ENCODE measurements at regions of chr1 and their contacts with region 1.

Region 1: GRCh38 chr1:43912607-43913006 is 21.0 kb upstream of the ARTN start:
- DNase-seq: no peak
- ATAC-seq: no peak
- H3K4me3 ChIP-seq: no peak overlapping the region
- H3K27ac ChIP-seq: peak overlapping the region in 1 of 2 experiments; percentile 46; a peak in 3 of 6 replicates
- H3K4me1 ChIP-seq: peaks cover 6% of the 10 kb centered on the region; the same call in 1 of the 3 replicates
- CTCF ChIP-seq: no peak
- EP300 ChIP-seq: no peak
- POLR2A ChIP-seq: no peak
- RAD21 ChIP-seq: no peak

Region 2: DNA sequence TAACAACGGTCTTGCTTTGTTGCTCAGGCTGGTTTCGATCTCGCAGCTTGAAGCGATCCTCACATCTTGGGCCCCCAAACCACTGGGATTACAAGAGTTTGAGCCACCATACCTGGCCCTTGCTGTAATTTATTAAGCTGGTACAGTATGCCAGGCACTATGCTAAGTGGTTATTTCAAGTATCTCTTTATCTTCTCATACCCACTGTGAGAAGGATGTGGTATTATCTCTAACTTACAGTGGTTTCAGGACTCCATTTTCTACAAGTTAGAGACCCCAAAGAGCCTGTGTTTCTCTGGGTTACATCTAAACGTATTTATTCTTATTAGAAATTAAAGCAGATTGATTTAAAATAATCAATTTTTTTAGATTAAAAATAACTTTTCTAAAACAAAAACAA is 213.3 kb before region 1 on chr1:
- CTCF ChIA-PET with region 1: no interaction called
- POLR2A ChIA-PET with region 1: no interaction called
- DNase-seq: no peak
- ATAC-seq: no peak
- H3K4me3 ChIP-seq: no peak overlapping the region
- H3K27ac ChIP-seq: no peak overlapping the region
- H3K4me1 ChIP-seq: no peaks in the 10 kb centered on the region
- CTCF ChIP-seq: no peak
- EP300 ChIP-seq: no peak
- POLR2A ChIP-seq: no peak
- RAD21 ChIP-seq: no peak

Region 3: DNA sequence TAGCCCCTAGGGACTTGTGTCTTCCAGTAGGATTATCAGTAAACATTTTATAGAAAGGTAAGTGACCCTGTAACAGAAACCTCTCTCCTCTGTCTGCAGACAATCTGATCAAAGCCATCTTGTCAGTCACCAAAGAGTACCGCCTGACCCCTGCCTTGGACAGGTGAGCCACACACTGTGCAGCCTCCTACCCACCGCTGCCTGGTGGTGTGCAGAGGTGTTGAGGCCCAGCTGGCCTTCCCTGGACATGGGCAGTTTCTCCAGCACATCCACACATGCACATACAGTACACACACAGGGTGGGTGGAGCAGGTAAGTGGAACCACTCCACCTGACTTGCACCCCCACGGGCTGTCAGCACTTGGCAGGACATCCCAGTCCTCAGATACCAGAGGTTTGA is 14.5 kb before region 1 on chr1:
- CTCF ChIA-PET with region 1: interaction called, 10 read pairs
- POLR2A ChIA-PET with region 1: no interaction called
- DNase-seq: no peak
- ATAC-seq: no peak
- H3K4me3 ChIP-seq: no peak overlapping the region
- H3K27ac ChIP-seq: no peak overlapping the region
- H3K4me1 ChIP-seq: no peaks in the 10 kb centered on the region
- CTCF ChIP-seq: no peak
- EP300 ChIP-seq: no peak
- POLR2A ChIP-seq: no peak
- RAD21 ChIP-seq: no peak

Region 4: DNA sequence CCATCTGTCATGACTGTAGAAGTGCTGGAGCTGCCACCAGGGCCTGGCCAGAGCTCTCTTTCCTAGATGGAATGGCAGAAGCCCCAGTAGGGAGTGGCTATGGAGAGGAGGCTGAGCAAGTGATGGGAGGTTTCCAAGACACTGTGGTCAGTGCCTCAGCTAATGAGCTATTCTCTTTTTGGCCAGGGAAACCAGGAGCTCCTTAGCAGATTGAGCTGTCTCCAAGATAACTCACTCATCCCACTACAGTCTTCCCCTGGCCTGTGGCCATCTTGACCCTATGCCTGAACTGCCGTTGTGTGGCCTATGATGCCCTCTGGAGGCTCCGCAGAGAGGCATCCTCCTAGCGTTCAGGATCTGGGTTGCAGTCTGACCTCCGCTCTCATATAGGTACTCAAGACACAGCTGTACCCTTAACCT is 382.0 kb after region 1 on chr1:
- CTCF ChIA-PET with region 1: no interaction called
- POLR2A ChIA-PET with region 1: no interaction called
- DNase-seq: peak; percentile 28 to 32
- ATAC-seq: peak; percentile 64 to 92; a peak in 5 of 6 replicates
- H3K4me3 ChIP-seq: no peak overlapping the region
- H3K27ac ChIP-seq: no peak overlapping the region
- H3K4me1 ChIP-seq: no peaks in the 10 kb centered on the region
- CTCF ChIP-seq: peak; percentile 21; the same call in 2 of the 3 replicates
- EP300 ChIP-seq: no peak
- POLR2A ChIP-seq: no peak
- RAD21 ChIP-seq: peak in 1 of 2 experiments; percentile 57; a peak in 3 of 5 replicates

Measured in A549 (cell line).